Thyroid gland (tissue), 4 donors: ENCODE measurements at regions of chr1 and their contacts with region 1.

Region 1: DNA sequence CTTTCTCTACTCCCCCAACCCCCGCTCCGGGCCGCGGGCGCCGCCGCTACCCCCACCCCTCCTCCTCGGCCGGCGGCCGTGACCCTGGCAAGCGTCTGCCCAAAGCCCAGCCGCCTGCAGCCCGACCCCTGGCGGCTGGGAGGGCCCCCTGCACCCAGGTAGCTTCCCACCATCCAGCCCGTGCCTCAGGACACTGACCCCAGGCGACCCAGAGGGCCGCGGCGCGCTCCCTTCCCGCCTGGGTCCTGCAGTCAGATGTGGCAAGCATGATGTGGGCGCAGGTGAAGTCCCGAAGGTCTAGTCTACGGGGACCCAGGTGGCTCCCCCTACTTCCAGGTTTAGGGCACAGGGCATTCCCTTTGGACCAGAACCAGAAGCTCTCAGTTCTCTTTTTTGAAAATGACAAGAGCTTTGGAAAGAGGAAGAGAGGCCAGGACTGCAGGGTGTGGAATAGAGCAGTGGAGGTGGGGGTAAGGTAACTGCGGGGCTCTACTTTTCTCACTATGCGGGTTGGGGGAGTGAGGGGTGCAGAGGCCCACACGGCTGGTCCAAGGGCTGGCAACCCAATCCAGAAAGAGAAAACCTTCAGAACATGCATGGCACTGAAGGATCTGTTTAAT is at the start of gene DENND4B:
- DNase-seq: peak; percentile 81 to 82
- H3K4me3 ChIP-seq: peak within 1 kb of the TSS; percentile 70 to 89 (median 89)
- H3K27ac ChIP-seq: peak within 1 kb of the TSS; percentile 88 to 98 (median 92)
- H3K4me1 ChIP-seq: peaks cover 9 to 18% of the 10 kb centered on the region in 2 donors
- H3K27me3 ChIP-seq: no peaks in the 10 kb centered on the region
- CTCF ChIP-seq: peak; percentile 67 to 100 (median 90)
- POLR2A ChIP-seq: peak in 1 of 2 donors; percentile 2
- total RNA-seq, gene DENND4B: 28.9 to 63.7 (median 44.8) TPM

Region 2: DNA sequence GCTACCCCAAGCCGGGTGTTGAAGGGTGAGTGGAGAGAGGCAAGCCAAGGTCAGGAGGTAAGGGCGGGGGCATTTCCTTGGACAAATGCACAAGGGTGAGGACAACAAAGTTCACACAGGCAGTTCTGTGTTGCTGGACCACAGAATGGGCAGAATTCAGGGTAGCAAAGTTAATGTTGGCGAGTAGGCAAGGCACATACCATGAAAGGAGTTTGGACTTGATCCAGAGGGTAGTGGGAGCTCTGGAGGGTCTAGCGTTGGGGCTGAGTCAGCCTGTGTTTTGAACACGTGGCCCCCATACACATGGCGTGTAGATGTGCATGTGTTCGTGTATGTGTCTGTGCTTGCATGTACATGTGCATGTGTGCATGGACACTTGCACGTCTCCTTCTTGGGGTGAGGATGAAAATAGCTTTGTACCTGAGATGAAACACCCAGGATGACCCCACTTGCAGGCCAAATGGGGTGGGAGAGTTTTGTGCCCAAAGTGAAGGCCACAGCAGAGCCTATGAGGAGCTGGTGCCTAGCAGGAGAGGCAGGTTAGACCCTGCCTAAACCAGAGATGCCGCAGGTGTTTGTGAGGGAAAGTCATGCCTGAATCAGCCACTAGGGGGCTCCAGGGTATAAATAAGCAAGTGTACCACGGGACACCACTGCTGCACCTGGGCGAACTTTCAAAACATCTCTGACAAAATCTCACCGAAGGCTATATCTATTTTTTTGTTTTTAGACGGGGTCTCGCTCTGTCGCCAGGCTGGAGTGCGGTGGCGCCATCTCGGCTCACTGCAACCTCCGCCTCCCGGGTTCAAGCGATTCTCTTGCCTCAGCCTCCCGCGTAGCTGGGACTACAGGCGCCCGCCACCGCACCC is 149.7 kb before region 1 on chr1:
- intact Hi-C with region 1: loop called (anchors 10 kb)
- DNase-seq: peak; percentile 89 to 92
- H3K4me3 ChIP-seq: no peak overlapping the region
- H3K27ac ChIP-seq: no peak overlapping the region
- H3K4me1 ChIP-seq: no peaks in the 10 kb centered on the region
- H3K27me3 ChIP-seq: no peaks in the 10 kb centered on the region
- CTCF ChIP-seq: peak; percentile 74 to 94 (median 88)
- POLR2A ChIP-seq: no peak